ENCODE measurements at regions of chrX and their contacts with region 1.

Region 1: DNA sequence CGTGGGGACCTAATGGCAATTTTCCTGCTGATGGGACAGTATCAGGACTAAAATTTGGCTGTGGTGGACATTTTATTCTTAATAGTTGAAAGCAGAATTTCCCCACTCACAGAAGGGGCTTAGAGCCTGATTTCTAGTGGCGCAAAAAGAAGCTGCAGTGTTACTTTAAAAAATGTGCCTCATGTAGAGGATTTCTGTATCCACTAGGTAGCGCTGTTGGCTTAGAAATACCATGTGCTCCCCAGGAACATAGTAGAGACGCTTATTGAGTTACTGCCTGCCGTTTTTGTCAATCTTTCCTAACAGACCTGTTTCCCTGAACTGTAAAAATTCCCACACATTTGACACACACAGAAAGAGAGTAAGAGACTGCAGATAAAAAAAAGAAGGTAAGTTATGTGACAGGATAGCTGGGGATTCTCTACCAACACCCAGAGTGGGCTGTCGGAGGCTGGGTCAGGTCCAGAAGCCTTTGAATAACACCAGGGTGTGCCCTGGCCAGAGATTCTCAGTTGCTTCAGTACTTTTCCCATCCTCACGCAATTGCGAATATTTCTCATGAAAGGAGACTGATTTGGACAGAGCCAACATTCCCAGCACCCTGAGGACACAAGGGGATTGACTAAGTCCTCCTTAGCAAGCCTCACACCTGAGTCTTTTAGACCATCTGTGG is 88.4 kb downstream of the ZXDA start:
- DNase-seq: peak in 1 of 3 donors; percentile 47
- ATAC-seq: peak; percentile 77
- H3K4me3 ChIP-seq: no peak overlapping the region
- H3K4me1 ChIP-seq: no peaks in the 10 kb centered on the region
- CTCF ChIP-seq: no peak

Region 2: DNA sequence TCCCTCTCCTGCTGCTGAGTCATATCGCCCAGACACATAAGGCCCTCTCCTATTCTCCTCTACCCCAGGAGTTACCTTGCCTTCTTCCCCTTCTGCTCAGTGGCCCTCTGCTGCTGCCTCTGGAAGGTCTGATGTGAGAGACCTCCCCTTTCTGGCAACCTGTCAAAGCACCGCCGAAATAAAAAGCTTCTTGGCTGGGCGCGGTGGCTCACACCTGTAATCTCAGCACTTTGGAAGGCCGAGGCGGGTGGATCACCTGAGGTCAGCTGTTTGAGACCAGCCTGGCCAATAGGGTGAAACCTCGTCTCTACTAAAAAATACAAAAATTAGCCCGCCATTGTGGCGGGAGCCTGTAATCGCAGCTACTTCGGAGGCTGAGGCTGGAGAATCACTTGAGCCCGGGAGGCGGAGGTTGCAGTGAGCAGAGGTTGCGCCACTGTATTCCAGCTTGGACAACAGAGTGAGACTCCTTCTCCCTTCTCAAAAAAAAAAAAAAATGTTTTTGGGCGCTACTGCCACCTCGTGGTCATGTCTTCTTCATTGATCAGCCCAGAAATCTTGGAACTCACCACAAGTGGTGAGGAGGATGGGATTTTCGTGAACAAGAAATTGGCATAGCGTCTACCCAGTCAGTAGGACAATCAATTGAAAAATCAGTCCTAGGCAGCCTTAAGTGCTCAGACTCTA is 97.1 kb after region 1 on chrX:
- intact Hi-C with region 1: loop called (anchors 5 to 10 kb)
- DNase-seq: peak in 2 of 3 donors; percentile 30 to 45
- ATAC-seq: peak; percentile 78
- H3K4me3 ChIP-seq: no peak overlapping the region
- H3K4me1 ChIP-seq: no peaks in the 10 kb centered on the region
- CTCF ChIP-seq: no peak

Region 3: DNA sequence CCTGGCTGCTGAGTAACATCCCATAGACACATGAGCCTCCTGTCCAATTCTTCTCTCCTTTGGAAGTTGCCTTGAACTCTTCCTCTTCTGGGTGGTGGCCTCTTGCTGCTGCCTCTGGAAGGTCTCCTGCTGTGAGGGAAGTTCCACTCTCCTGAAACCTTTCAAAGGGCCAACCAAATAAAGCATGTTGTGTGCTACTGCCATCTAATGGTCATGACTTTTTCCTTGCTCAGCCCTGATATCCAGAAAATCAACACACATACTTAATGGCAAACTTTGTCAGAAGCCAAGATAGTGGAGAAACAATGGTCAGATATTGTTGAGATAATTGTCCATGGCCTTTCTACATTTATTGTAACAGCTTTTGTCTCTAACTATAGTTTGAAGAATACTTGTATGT is 107.5 kb after region 1 on chrX:
- intact Hi-C with region 1: loop called in 1 of 2 experiments (anchors 10 kb)
- DNase-seq: peak in 1 of 3 donors; percentile 7
- ATAC-seq: no peak
- H3K4me3 ChIP-seq: no peak overlapping the region
- H3K4me1 ChIP-seq: no peaks in the 10 kb centered on the region
- CTCF ChIP-seq: no peak

Region 4: DNA sequence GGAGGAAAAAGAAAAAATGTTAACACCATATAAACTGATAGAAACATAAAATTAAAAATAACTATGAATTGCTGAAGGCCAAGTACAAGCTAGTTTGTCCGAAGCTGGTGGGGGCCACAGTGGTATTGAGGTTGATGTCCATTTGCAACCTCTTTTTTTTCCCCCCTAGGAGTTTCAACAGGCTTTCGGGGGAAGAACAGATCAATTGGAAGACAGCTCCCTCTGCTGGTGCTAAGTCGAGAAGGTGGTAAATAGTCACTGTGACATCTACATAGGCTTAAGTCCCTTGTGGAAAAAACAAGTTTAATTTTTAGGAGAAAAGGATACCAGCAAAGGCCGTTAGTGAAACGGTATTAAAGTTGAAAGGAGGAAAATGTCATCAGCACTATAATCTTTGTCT is 204.1 kb after region 1 on chrX:
- intact Hi-C with region 1: loop called in 1 of 2 experiments (anchors 10 kb)
- DNase-seq: peak in 1 of 3 donors; percentile 44
- ATAC-seq: no peak
- H3K4me3 ChIP-seq: no peak overlapping the region
- H3K4me1 ChIP-seq: no peaks in the 10 kb centered on the region
- CTCF ChIP-seq: no peak

Measured in mucosa of descending colon (tissue), 3 donors.